ENCODE measurements at regions of chr1 and their contacts with region 1.

Region 1: GRCh38 chr1:110312188-110313121 is 26.7 kb upstream of the RBM15 start:
- DNase-seq: peak; percentile 57 to 87
- ATAC-seq: peak; percentile 85 to 98 (median 98)
- H3K4me3 ChIP-seq: no peak overlapping the region
- H3K4me3 Mint-ChIP-seq: no peak overlapping the region
- H3K27ac ChIP-seq: no peak overlapping the region
- H3K27ac Mint-ChIP-seq: no peak overlapping the region
- H3K4me1 ChIP-seq: peaks cover 4% of the 10 kb centered on the region
- H3K4me1 Mint-ChIP-seq: no peaks in the 10 kb centered on the region
- H3K27me3 ChIP-seq: no peaks in the 10 kb centered on the region
- H3K27me3 Mint-ChIP-seq: no peaks in the 10 kb centered on the region
- CTCF ChIP-seq: peak; percentile 93

Region 2: GRCh38 chr1:110203021-110203661 is 109.3 kb before region 1 on chr1:
- intact Hi-C with region 1: loop called (anchors 1 kb)
- DNase-seq: peak; percentile 37 to 90
- ATAC-seq: peak; percentile 63 to 77 (median 68)
- H3K4me3 ChIP-seq: no peak overlapping the region
- H3K4me3 Mint-ChIP-seq: no peak overlapping the region
- H3K27ac ChIP-seq: no peak overlapping the region
- H3K27ac Mint-ChIP-seq: no peak overlapping the region
- H3K4me1 ChIP-seq: peaks cover 13% of the 10 kb centered on the region
- H3K4me1 Mint-ChIP-seq: peaks cover 5 to 15% of the 10 kb centered on the region in 2 donors
- H3K27me3 ChIP-seq: no peaks in the 10 kb centered on the region
- H3K27me3 Mint-ChIP-seq: no peaks in the 10 kb centered on the region
- CTCF ChIP-seq: peak; percentile 90

Region 3: GRCh38 chr1:110393691-110394564 is 81.5 kb after region 1 on chr1:
- intact Hi-C with region 1: no loop called
- DNase-seq: no peak
- ATAC-seq: no peak
- H3K4me3 ChIP-seq: no peak overlapping the region
- H3K4me3 Mint-ChIP-seq: no peak overlapping the region
- H3K27ac ChIP-seq: no peak overlapping the region
- H3K27ac Mint-ChIP-seq: no peak overlapping the region
- H3K4me1 ChIP-seq: no peaks in the 10 kb centered on the region
- H3K4me1 Mint-ChIP-seq: no peaks in the 10 kb centered on the region
- H3K27me3 ChIP-seq: no peaks in the 10 kb centered on the region
- H3K27me3 Mint-ChIP-seq: no peaks in the 10 kb centered on the region
- CTCF ChIP-seq: no peak

Measured in natural killer cell (primary cell).